ENCODE measurements at regions of chr10 and their contacts with region 1.

Region 1: GRCh38 chr10:93224005-93224779 is 150.5 kb downstream of the CYP26A1 start:
- DNase-seq: no peak
- ATAC-seq: peak; percentile 39
- H3K4me3 Mint-ChIP-seq: no peak overlapping the region
- H3K27ac Mint-ChIP-seq: no peak overlapping the region
- H3K4me1 Mint-ChIP-seq: peaks cover 17% of the 10 kb centered on the region
- H3K27me3 Mint-ChIP-seq: peaks cover 22% of the 10 kb centered on the region
- CTCF ChIP-seq: no peak

Region 2: GRCh38 chr10:93199191-93199751 is 24.9 kb before region 1 on chr10:
- CTCF ChIA-PET with region 1: interaction called, 10 read pairs
- POLR2A ChIA-PET with region 1: no interaction called
- DNase-seq: no peak
- ATAC-seq: peak; percentile 56
- H3K4me3 Mint-ChIP-seq: no peak overlapping the region
- H3K27ac Mint-ChIP-seq: peak overlapping the region; percentile 88
- H3K4me1 Mint-ChIP-seq: peaks cover 24% of the 10 kb centered on the region
- H3K27me3 Mint-ChIP-seq: no peaks in the 10 kb centered on the region
- CTCF ChIP-seq: no peak

Region 3: GRCh38 chr10:93280699-93281366 is 56.6 kb after region 1 on chr10:
- CTCF ChIA-PET with region 1: interaction called, 10 read pairs
- POLR2A ChIA-PET with region 1: no interaction called
- DNase-seq: peak; percentile 89
- ATAC-seq: peak; percentile 90
- H3K4me3 Mint-ChIP-seq: peak overlapping the region; percentile 42
- H3K27ac Mint-ChIP-seq: peak overlapping the region; percentile 100
- H3K4me1 Mint-ChIP-seq: peaks cover 59% of the 10 kb centered on the region
- H3K27me3 Mint-ChIP-seq: peaks cover 52% of the 10 kb centered on the region
- CTCF ChIP-seq: no peak